PC-3 (cell line): ENCODE measurements at regions of chr20 and their contacts with region 1.

Region 1: GRCh38 chr20:19784511-19785172 is 26.6 kb downstream of the RIN2 start:
- DNase-seq: peak; percentile 96
- ATAC-seq: peak; percentile 90
- H3K4me3 ChIP-seq: peak overlapping the region; percentile 31; the same call in 1 of the 2 replicates
- H3K27ac ChIP-seq: peak overlapping the region; percentile 91
- H3K4me1 ChIP-seq: peaks cover 44% of the 10 kb centered on the region
- H3K27me3 ChIP-seq: no peaks in the 10 kb centered on the region
- CTCF ChIP-seq: peak; percentile 94

Region 2: DNA sequence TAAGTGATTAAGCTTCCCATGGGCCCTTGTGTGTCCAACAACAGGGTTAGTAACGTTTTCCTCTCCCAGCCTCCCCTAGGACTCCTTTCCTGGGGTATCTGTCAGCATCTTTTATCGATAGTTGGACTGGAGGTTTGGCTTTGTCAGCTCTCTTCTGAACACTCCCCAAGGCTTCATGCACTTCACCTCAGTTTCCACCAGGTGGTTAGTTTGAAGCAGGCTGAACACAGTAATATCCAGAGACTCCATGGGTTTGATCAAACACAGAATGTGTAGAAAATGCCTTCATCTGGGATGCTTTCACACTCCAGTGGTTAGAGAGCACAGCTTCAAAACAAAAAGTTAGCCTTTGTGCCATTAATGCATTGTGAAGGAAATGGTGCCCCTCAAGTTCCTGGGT is 433.1 kb before region 1 on chr20:
- CTCF ChIA-PET with region 1: no interaction called
- POLR2A ChIA-PET with region 1: no interaction called
- intact Hi-C with region 1: no loop called
- DNase-seq: no peak
- ATAC-seq: no peak
- H3K4me3 ChIP-seq: no peak overlapping the region
- H3K27ac ChIP-seq: no peak overlapping the region
- H3K4me1 ChIP-seq: no peaks in the 10 kb centered on the region
- H3K27me3 ChIP-seq: peaks cover 26% of the 10 kb centered on the region
- CTCF ChIP-seq: no peak

Region 3: GRCh38 chr20:19692685-19693119 is 91.9 kb before region 1 on chr20:
- CTCF ChIA-PET with region 1: no interaction called
- POLR2A ChIA-PET with region 1: no interaction called
- intact Hi-C with region 1: loop called (anchors 1 kb)
- DNase-seq: peak; percentile 82
- ATAC-seq: peak; percentile 53
- H3K4me3 ChIP-seq: peak overlapping the region; percentile 37
- H3K27ac ChIP-seq: peak overlapping the region; percentile 86
- H3K4me1 ChIP-seq: peaks cover 46% of the 10 kb centered on the region
- H3K27me3 ChIP-seq: no peaks in the 10 kb centered on the region
- CTCF ChIP-seq: peak; percentile 98

Region 4: GRCh38 chr20:19757487-19758132 is 27.0 kb before region 1 on chr20:
- CTCF ChIA-PET with region 1: interaction called, 6 read pairs
- POLR2A ChIA-PET with region 1: interaction called, 11 read pairs
- intact Hi-C with region 1: loop called (anchors 1 kb)
- DNase-seq: peak; percentile 96
- ATAC-seq: peak; percentile 77
- H3K4me3 ChIP-seq: peak overlapping the region; percentile 89
- H3K27ac ChIP-seq: peak overlapping the region; percentile 87
- H3K4me1 ChIP-seq: peaks cover 32% of the 10 kb centered on the region
- H3K27me3 ChIP-seq: no peaks in the 10 kb centered on the region
- CTCF ChIP-seq: no peak

Region 5: DNA sequence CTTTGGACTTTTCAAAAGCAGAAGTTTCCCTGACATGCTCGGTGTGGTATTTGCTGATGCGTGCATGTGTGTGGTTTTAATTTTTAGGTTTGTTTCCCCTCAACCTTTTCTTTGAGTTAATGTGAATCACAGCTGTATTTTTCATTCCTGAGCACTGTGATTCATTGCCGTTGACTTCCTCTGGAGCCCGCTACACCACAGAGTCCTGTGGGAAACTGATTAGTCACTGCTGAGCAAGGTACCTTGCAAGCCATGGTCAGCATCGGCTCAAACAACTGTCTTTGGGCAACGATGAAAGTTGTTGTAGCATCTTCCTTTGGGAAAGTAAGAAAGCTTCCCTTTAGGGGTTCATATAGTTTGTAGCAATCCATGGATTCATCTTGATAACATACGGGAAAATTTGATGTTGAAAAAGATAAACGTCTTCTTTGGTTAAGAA is 30.9 kb after region 1 on chr20:
- CTCF ChIA-PET with region 1: no interaction called
- POLR2A ChIA-PET with region 1: no interaction called
- intact Hi-C with region 1: loop called (anchors 1 kb)
- DNase-seq: peak; percentile 99
- ATAC-seq: peak; percentile 88
- H3K4me3 ChIP-seq: no peak overlapping the region
- H3K27ac ChIP-seq: peak overlapping the region; percentile 98
- H3K4me1 ChIP-seq: peaks cover 50% of the 10 kb centered on the region
- H3K27me3 ChIP-seq: no peaks in the 10 kb centered on the region
- CTCF ChIP-seq: no peak

Region 6: GRCh38 chr20:19880256-19881079 is 95.8 kb after region 1 on chr20:
- CTCF ChIA-PET with region 1: no interaction called
- POLR2A ChIA-PET with region 1: no interaction called
- intact Hi-C with region 1: loop called (anchors 1 kb)
- DNase-seq: peak; percentile 95
- ATAC-seq: peak; percentile 86
- H3K4me3 ChIP-seq: peak overlapping the region; percentile 29; the same call in 1 of the 2 replicates
- H3K27ac ChIP-seq: peak overlapping the region; percentile 96
- H3K4me1 ChIP-seq: peaks cover 50% of the 10 kb centered on the region
- H3K27me3 ChIP-seq: no peaks in the 10 kb centered on the region
- CTCF ChIP-seq: no peak

Region 7: GRCh38 chr20:19974626-19975435 is 190.2 kb after region 1 on chr20:
- CTCF ChIA-PET with region 1: interaction called, 3 read pairs
- POLR2A ChIA-PET with region 1: interaction called, 3 read pairs
- intact Hi-C with region 1: loop called (anchors 1 kb)
- DNase-seq: peak; percentile 87
- ATAC-seq: peak; percentile 56
- H3K4me3 ChIP-seq: peak overlapping the region; percentile 87
- H3K27ac ChIP-seq: peak overlapping the region; percentile 93
- H3K4me1 ChIP-seq: peaks cover 42% of the 10 kb centered on the region
- H3K27me3 ChIP-seq: no peaks in the 10 kb centered on the region
- CTCF ChIP-seq: no peak

Region 8: DNA sequence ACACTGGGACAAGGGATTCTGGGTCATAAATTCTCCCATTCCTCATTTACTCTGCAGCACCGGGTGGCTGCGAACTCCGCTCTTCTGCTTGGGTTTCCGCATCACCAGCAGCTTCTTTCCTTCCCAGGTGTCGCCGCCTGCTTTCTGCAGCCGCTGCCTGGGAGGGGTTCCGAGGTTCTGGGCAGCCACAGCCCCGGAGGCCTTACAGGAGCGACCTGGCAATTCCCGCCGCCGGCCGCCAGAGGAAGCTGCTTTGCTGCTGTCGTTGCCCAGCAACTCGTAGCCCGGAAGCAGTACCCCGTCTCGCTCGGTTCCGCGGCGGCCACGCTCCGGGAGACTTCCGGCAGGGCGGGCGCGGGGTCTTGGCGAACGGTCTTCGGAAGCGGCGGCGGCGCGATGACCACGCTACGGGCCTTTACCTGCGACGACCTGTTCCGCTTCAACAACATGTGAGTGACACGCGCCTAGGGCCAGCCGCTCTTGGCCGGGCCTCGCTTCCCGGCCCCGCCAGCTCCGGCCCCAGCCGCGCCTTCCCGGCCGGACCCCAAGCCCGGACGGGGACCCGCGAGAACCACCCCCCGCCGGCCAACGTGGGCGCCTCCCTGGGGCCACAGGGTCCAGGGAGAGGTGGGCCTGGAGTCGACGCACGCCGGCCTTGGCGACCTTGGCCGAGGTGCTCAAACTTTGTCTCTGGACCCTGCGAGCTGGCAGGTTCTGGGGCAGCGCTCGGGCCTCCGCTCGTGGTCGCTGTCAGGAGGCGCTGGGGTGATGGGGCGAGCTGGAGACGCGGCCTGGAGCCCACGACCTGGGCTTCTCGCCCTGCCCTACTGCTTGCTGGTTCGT is 232.6 kb after region 1 on chr20 and contains the start of gene NAA20:
- CTCF ChIA-PET with region 1: no interaction called
- POLR2A ChIA-PET with region 1: no interaction called
- intact Hi-C with region 1: loop called (anchors 2 kb)
- DNase-seq: peak; percentile 95
- ATAC-seq: peak; percentile 93
- H3K4me3 ChIP-seq: peak within 1 kb of the TSS; percentile 90
- H3K27ac ChIP-seq: peak within 1 kb of the TSS; percentile 49
- H3K4me1 ChIP-seq: peaks cover 39% of the 10 kb centered on the region
- H3K27me3 ChIP-seq: no peaks in the 10 kb centered on the region
- CTCF ChIP-seq: peak; percentile 56
- total RNA-seq, gene NAA20: 107 and 113 TPM in 2 replicates

Region 9: DNA sequence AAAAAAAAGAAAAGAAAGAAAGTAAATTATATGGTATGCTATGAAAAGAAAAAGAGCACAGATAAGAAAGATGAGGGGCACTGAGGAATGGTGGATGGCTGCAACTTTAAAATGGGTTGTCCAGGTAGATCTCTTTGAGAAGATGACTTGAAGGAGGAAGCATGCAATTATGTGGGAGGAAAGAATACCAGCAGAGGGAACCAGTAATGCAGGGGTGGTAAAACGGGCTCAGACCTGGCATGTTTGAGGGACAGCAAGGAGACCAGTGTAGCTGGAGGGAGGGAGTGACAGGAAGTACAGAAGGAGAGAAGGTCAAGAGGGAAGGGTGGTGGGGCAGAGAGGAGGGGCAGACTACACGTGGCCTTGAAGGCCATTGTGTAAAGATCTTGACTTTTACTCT is 1299.2 kb after region 1 on chr20:
- CTCF ChIA-PET with region 1: no interaction called
- POLR2A ChIA-PET with region 1: no interaction called
- intact Hi-C with region 1: no loop called
- DNase-seq: no peak
- ATAC-seq: no peak
- H3K4me3 ChIP-seq: no peak overlapping the region
- H3K27ac ChIP-seq: no peak overlapping the region
- H3K4me1 ChIP-seq: peaks cover 8% of the 10 kb centered on the region
- H3K27me3 ChIP-seq: peaks cover 52% of the 10 kb centered on the region
- CTCF ChIP-seq: no peak